ENCODE measurements at regions of chr10 and their contacts with region 1.

Region 1: DNA sequence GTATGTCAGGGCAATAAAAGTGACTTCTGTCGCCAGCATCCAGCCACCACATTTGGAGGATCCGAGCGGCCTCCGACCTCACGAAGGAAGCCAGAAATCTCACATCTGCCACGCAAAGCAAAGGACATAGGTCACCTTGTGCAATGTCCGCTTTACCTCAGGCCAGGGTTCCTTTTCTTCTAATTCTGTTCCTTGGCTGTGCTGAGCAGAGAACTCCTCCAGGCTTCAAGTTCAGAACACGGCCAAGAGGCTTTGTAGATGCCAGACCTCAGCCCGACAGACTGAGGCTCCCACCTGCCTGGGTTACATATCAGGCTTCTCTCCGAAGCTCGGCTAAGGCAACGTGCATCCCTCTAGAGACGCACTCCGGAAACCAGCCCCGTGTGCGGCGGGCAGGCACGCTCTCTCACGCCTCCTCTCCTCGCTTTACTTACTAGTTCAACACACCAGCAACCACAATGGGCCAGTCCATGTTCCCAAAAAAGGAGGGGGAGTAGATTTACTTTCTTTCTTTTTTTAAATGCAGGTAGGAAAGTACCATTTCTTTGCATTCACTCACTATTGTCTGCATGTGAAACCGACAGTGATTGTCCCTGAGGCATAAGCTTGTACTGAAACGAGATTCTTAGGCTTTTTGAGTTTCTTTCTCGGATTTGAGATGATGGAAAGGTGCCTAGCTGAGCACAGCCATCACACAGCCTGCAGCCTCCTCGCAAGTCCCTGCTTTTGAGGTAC is 122.4 kb upstream of the AFAP1L2 start:
- DNase-seq: peak; percentile 67
- ATAC-seq: peak; percentile 96
- H3K4me3 Mint-ChIP-seq: peak overlapping the region; percentile 95
- H3K27ac Mint-ChIP-seq: peak overlapping the region; percentile 99
- H3K4me1 Mint-ChIP-seq: peaks cover 63% of the 10 kb centered on the region
- H3K27me3 Mint-ChIP-seq: no peaks in the 10 kb centered on the region
- CTCF ChIP-seq: no peak

Region 2: DNA sequence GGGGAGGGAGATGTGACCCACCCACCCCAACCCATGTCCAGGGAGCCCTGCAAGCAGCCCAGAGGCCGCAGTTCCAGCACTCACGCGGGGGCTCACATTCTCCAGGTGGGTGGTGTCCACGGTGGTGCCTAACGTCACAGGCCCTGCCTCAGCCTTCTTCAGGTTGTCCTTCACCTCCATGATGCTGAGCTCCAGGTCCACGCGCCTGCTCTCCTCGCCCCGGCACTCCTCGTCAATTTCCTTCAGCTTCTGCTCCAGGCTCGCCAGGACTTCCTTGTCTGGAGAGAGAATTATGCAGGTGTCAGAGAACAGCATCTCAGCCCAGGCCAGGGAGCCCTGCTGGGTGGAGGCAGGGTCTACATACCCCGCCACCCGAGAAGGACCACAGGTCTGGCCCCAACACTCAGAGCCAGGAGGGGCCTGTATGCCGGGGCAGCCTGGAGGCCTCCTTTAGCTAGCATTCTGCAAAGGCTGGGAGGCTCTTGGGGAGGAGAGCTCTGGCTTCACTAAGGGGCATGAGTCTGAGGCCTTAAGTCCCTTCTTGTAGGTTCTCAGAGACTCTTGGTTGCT is 229.4 kb before region 1 on chr10:
- CTCF ChIA-PET with region 1: no interaction called
- POLR2A ChIA-PET with region 1: no interaction called
- intact Hi-C with region 1: no loop called
- DNase-seq: no peak
- ATAC-seq: no peak
- H3K4me3 Mint-ChIP-seq: no peak overlapping the region
- H3K27ac Mint-ChIP-seq: no peak overlapping the region
- H3K4me1 Mint-ChIP-seq: no peaks in the 10 kb centered on the region
- H3K27me3 Mint-ChIP-seq: no peaks in the 10 kb centered on the region
- CTCF ChIP-seq: no peak

Region 3: DNA sequence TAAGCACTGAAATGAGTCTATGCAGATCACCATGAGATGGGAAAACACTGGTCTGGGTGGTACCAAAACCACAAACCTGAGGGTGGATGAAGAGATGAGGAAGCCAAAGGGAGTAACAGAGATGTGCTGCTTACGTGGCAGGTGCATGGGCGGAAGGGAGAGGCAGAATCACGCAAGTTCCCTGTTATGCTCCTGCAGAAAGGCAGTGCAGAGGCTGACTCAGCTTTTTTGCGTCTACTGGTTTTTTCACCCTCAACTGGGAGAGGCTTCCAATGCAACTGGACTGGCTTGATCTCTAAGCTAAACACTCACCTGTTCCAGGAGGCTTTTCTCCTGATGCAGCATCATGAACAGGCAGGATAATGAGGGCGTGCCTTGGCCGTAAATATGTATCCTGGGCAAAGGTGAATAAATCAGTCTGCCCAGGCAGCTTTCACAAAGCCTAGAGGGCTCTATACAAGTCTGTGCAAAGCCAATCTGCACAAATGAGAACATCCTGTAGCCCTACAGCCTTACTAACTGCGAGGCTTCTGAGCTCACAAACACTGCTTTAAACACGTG is 27.0 kb before region 1 on chr10:
- CTCF ChIA-PET with region 1: interaction called, 24 read pairs
- POLR2A ChIA-PET with region 1: interaction called, 268 read pairs
- intact Hi-C with region 1: loop called (anchors 1 kb)
- DNase-seq: peak; percentile 37
- ATAC-seq: peak; percentile 49
- H3K4me3 Mint-ChIP-seq: peak overlapping the region; percentile 67
- H3K27ac Mint-ChIP-seq: peak overlapping the region; percentile 96
- H3K4me1 Mint-ChIP-seq: peaks cover 83% of the 10 kb centered on the region
- H3K27me3 Mint-ChIP-seq: no peaks in the 10 kb centered on the region
- CTCF ChIP-seq: no peak

Region 4: DNA sequence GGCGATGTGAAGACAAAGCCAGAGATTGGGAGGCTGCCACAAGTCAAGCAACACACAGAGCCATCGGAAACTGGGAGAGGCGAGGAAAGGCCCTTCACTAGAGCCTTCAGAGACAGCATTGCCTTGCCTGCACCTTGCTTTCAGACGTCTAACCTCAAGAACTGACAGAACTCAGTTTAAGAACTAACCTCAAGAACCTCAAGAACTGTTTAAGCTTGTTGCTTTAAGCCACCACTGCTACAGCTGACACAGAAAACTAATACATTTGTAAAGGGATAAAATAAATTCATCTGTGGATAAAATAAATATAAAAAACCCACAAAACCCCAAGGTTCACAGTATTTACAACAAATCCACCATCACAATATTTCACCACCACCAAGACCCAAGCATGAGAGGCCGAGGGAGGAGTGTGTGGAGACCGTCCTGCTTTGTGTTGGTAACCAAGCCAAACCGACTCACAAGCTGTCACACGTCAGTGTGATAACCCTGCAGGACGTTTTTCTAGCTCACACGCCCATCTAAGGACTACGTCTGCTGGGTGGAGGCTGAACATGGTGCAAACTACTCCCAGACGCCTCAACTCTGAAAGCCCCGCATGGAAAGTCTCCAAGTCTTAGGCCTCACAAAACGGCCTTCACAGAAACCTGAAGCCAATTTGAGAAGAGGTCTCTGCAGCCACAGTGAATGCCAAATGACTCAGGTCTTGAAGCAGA is 14.6 kb after region 1 on chr10:
- CTCF ChIA-PET with region 1: interaction called, 9 read pairs
- POLR2A ChIA-PET with region 1: interaction called, 48 read pairs
- intact Hi-C with region 1: loop called (anchors 1 kb)
- DNase-seq: no peak
- ATAC-seq: no peak
- H3K4me3 Mint-ChIP-seq: no peak overlapping the region
- H3K27ac Mint-ChIP-seq: peak overlapping the region; percentile 64
- H3K4me1 Mint-ChIP-seq: peaks cover 66% of the 10 kb centered on the region
- H3K27me3 Mint-ChIP-seq: no peaks in the 10 kb centered on the region
- CTCF ChIP-seq: no peak

Region 5: GRCh38 chr10:114577133-114577532 is 50.5 kb after region 1 on chr10:
- CTCF ChIA-PET with region 1: no interaction called
- POLR2A ChIA-PET with region 1: no interaction called
- intact Hi-C with region 1: no loop called
- DNase-seq: no peak
- ATAC-seq: no peak
- H3K4me3 Mint-ChIP-seq: no peak overlapping the region
- H3K27ac Mint-ChIP-seq: no peak overlapping the region
- H3K4me1 Mint-ChIP-seq: no peaks in the 10 kb centered on the region
- H3K27me3 Mint-ChIP-seq: no peaks in the 10 kb centered on the region
- CTCF ChIP-seq: no peak

Region 6: GRCh38 chr10:114631666-114632417 is 105.2 kb after region 1 on chr10:
- CTCF ChIA-PET with region 1: no interaction called
- POLR2A ChIA-PET with region 1: no interaction called
- intact Hi-C with region 1: no loop called
- DNase-seq: peak; percentile 20
- ATAC-seq: peak; percentile 66
- H3K4me3 Mint-ChIP-seq: peak overlapping the region; percentile 74
- H3K27ac Mint-ChIP-seq: peak overlapping the region; percentile 14
- H3K4me1 Mint-ChIP-seq: peaks cover 24% of the 10 kb centered on the region
- H3K27me3 Mint-ChIP-seq: peaks cover 50% of the 10 kb centered on the region
- CTCF ChIP-seq: no peak

Region 7: DNA sequence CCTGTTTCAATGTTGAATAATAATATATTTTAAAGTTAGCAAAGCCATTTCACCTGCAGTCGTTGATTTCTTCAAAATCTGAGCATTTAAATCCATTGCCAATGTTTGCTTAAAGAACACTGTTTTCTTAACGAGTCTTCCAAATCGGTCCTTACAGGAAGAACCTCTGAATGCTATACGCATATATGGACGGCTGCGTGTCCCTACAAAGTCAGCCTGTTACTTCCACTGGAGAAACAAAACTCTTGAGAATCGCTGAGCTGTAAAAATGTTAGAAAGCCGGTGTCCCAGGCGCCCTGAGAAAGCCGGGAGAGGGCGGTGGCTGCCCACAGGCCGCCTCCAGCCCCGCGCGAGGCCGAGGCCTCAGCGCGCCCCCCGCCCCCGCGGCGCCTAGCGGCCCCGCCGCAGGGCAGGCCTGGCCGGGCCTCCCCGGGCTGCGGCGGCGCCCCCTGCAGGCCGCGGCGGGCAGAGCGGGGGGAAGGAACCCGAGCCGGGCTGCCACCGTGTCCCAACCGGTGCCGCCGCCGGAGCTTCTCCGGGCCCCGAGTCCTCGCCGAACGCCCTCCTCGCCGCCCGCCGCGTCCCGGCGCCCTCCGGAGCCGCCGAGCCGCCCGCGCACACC is 294.7 kb after region 1 on chr10 and contains the start of gene FHIP2A:
- CTCF ChIA-PET with region 1: interaction called, 5 read pairs
- POLR2A ChIA-PET with region 1: interaction called, 10 read pairs
- intact Hi-C with region 1: loop called (anchors 2 kb)
- DNase-seq: peak; percentile 95
- ATAC-seq: peak; percentile 93
- H3K4me3 Mint-ChIP-seq: peak within 1 kb of the TSS; percentile 91
- H3K27ac Mint-ChIP-seq: peak within 1 kb of the TSS; percentile 90
- H3K4me1 Mint-ChIP-seq: peaks cover 27% of the 10 kb centered on the region
- H3K27me3 Mint-ChIP-seq: no peaks in the 10 kb centered on the region
- CTCF ChIP-seq: no peak
- total RNA-seq, gene FHIP2A: 16.5 and 20.2 TPM in 2 replicates

Region 8: DNA sequence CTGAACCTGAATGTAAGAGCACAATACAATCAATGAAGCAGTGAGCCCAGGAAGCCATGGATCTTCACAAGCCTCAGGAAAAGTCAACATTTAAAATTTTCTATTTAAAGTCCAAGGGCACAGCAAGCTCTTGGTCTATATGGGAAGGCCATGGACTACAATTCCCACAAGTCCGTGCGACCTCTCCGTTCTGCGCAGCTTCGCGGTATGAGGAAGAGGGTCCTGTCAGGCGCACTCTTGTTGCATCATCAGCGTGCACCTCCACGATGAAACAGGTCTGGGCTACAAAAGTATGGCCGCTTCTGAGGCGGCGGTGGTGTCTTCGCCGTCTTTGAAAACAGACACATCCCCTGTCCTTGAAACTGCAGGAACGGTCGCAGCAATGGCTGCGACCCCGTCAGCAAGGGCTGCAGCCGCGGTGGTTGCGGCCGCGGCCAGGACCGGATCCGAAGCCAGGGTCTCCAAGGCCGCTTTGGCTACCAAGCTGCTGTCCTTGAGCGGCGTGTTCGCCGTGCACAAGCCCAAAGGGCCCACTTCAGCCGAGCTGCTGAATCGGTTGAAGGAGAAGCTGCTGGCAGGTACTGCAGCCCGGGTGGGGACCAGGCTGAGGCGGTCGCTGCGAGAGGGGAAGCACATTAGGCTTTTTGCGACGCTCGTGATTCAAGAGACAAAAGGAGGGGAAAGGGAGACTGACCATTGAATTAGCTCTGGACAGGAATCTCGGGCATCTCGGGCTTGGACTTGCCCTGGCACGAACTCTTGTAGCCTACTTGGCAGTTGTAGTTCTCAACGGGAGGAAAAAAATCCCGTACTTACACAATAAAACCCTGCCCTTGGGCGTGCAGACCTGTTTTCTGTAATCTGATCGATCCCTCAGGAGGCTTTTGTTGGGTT is 411.5 kb after region 1 on chr10 and contains the start of gene TRUB1:
- CTCF ChIA-PET with region 1: no interaction called
- POLR2A ChIA-PET with region 1: interaction called, 3 read pairs
- intact Hi-C with region 1: loop called (anchors 5 kb)
- DNase-seq: peak; percentile 72
- ATAC-seq: peak; percentile 100
- H3K4me3 Mint-ChIP-seq: peak within 1 kb of the TSS; percentile 97
- H3K27ac Mint-ChIP-seq: peak within 1 kb of the TSS; percentile 95
- H3K4me1 Mint-ChIP-seq: peaks cover 24% of the 10 kb centered on the region
- H3K27me3 Mint-ChIP-seq: peaks cover 2% of the 10 kb centered on the region
- CTCF ChIP-seq: no peak
- total RNA-seq, gene TRUB1: 13.0 and 13.9 TPM in 2 replicates